K562 (cell line): ENCODE measurements at regions of chr17 and their contacts with region 1.

Region 1: GRCh38 chr17:82551779-82552457 is 32.4 kb downstream of the FOXK2 start:
- DNase-seq: peak; percentile 75 to 84 (median 78)
- ATAC-seq: peak; percentile 95
- H3K4me3 ChIP-seq: no peak overlapping the region
- H3K27ac ChIP-seq: no peak overlapping the region
- H3K4me1 ChIP-seq: peaks cover 13 to 25% of the 10 kb centered on the region in 2 experiments; a peak in 4 of 5 replicates
- H3K27me3 ChIP-seq: no peaks in the 10 kb centered on the region
- CTCF ChIP-seq: peak; percentile 82 to 85 (median 83)
- EP300 ChIP-seq: 0 out of 2 replicates have a peak, but pooled peaks have one; percentile 26
- POLR2A ChIP-seq: no peak
- RAD21 ChIP-seq: peak; percentile 68 to 81

Region 2: DNA sequence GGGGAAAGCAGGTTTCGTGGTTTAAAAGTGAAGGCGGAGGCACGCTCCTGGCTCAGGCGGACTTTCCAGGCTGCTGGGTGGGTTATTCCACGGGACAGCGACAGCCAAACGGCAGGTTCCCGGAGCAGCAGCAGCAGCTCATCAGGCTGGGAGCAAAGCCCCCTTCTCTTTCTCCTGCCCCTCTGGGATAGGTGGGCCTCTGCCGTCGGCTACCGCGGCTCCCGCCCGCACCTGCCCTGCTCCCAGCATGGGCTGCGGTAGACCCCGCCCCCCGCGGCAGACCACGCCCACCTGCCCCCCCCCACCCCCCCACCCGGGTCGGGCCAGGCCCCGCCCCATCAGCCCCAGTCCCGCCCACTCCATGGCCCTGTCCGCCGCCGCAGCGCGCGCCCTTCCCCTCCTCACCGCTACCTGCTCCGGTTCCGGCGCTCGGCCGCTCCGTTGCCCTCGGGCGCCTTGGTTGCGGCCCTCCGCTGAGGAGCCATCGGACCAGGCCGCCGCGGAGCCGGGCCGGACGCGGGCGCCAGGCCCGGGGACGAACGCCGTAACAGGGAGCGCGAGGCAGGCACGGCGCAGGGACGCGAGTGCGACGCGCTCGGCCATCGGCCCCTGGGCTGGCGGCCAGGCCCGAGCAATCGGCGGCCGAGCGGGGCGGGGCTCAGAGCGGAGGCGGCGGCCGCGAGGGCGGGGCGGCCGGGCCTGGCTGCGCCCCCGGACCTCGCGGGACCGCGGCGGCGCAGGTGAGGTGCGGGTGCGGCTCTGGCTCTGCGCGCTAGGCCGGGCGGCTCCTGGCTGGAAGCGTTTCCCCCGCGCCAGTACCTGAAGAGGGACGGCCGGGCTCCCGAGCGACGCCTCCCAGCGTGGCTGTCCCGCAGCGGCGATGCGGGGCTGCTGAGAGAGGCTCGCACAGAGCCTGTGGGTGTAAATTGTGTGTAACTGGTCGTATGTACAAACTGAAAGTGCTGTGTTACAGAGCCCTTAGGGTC is 133.6 kb before region 1 on chr17 and contains the starts of genes HEXD and OGFOD3:
- CTCF ChIA-PET with region 1: no interaction called
- POLR2A ChIA-PET with region 1: no interaction called
- in situ Hi-C with region 1: no loop called
- intact Hi-C with region 1: loop called (anchors 10 kb)
- DNase-seq: peak; percentile 91 to 100 (median 100)
- ATAC-seq: peak; percentile 85
- H3K4me3 ChIP-seq: peak within 1 kb of the TSS; percentile 90
- H3K27ac ChIP-seq: peak within 1 kb of the TSS; percentile 92
- H3K4me1 ChIP-seq: peaks cover 8 to 19% of the 10 kb centered on the region in 2 experiments
- H3K27me3 ChIP-seq: no peaks in the 10 kb centered on the region
- CTCF ChIP-seq: no peak
- EP300 ChIP-seq: no peak
- POLR2A ChIP-seq: peak; percentile 87
- RAD21 ChIP-seq: 0 out of 4 replicates have a peak, but pooled peaks of 1 of the 2 experiments have one; percentile 2
- polyA plus RNA-seq, gene HEXD: 1.0 TPM
- polyA plus RNA-seq, gene OGFOD3: 0.69 to 1.8 TPM

Region 3: DNA sequence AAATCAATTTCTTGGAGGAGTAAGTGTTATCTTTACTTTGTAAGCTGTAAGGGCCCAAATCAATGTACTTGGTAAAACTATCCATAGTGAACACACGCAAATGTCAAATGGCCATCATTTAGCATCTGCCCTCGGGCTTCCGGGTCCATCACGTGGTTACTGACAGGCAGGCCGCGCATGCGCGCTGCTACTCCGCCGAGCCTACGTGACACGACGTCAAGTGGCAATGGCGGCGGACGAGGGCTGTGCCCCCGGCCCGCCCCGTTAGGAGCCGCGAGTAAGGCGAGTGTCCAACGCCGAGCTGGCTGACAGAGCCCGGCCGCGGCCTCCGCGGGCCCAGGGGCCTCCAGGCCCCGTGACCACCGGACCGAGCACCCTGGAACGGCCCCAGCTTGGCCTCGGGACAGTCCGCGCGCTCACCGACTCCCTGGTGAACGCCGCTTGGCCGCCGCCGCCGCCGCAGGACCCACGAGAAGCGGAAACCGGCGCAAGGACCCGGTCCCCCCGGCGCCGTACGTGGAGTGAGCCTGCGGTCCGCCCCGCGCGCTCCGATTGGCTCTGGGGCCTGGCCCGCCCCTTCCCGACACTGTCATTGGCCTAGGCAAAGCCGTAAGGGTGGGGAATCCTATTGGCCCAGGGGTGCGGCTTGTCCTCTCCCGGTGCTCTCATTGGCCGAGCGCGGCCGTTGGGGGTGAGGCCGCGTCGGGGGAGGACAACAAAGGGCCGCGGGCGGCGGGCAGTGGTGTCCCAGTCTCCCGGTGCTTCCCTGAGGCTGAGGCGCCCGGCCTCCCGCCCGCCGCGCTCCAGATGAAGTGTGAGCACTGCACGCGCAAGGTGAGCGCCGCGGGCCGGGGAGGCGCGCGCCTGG is 93.7 kb before region 1 on chr17 and contains the start of gene NARF:
- CTCF ChIA-PET with region 1: no interaction called
- POLR2A ChIA-PET with region 1: no interaction called
- in situ Hi-C with region 1: no loop called
- intact Hi-C with region 1: loop called (anchors 5 kb)
- DNase-seq: peak; percentile 95 to 99 (median 97)
- ATAC-seq: peak; percentile 95
- H3K4me3 ChIP-seq: peak within 1 kb of the TSS; percentile 83
- H3K27ac ChIP-seq: peak within 1 kb of the TSS; percentile 97
- H3K4me1 ChIP-seq: peaks cover 49 to 67% of the 10 kb centered on the region in 2 experiments
- H3K27me3 ChIP-seq: no peaks in the 10 kb centered on the region
- CTCF ChIP-seq: no peak
- EP300 ChIP-seq: no peak
- POLR2A ChIP-seq: peak; percentile 98
- RAD21 ChIP-seq: peak; percentile 12 to 16; a peak in 2 of 4 replicates
- polyA plus RNA-seq, gene NARF: 60.4 to 114 TPM

Region 4: GRCh38 chr17:82536512-82537201 is 15.3 kb before region 1 on chr17:
- CTCF ChIA-PET with region 1: no interaction called
- POLR2A ChIA-PET with region 1: interaction called, 12 read pairs
- in situ Hi-C with region 1: no loop called
- intact Hi-C with region 1: no loop called
- DNase-seq: no peak
- ATAC-seq: no peak
- H3K4me3 ChIP-seq: no peak overlapping the region
- H3K27ac ChIP-seq: peak overlapping the region; percentile 38; the same call in 1 of the 3 replicates
- H3K4me1 ChIP-seq: peaks cover 14 to 28% of the 10 kb centered on the region in 2 experiments
- H3K27me3 ChIP-seq: no peaks in the 10 kb centered on the region
- CTCF ChIP-seq: no peak
- EP300 ChIP-seq: no peak
- POLR2A ChIP-seq: no peak
- RAD21 ChIP-seq: no peak

Region 5: GRCh38 chr17:82565551-82565950 is 13.6 kb after region 1 on chr17:
- CTCF ChIA-PET with region 1: no interaction called
- POLR2A ChIA-PET with region 1: no interaction called
- in situ Hi-C with region 1: no loop called
- intact Hi-C with region 1: no loop called
- DNase-seq: no peak
- ATAC-seq: no peak
- H3K4me3 ChIP-seq: no peak overlapping the region
- H3K27ac ChIP-seq: no peak overlapping the region
- H3K4me1 ChIP-seq: peaks cover 0 to 7% of the 10 kb centered on the region in 2 experiments; a peak in 2 of 5 replicates
- H3K27me3 ChIP-seq: no peaks in the 10 kb centered on the region
- CTCF ChIP-seq: no peak
- EP300 ChIP-seq: no peak
- POLR2A ChIP-seq: no peak
- RAD21 ChIP-seq: no peak